Activated T-helper 1 cell treated with anti-CD3 and anti-CD28 coated beads, Interleukin-12 subunit alpha, Interleukin-12 subunit beta, Interleukin-2, Interleukin-4 antibody, amounts not matched to agents 30 ng/mL and 10 ng/mL and 1 ng/mL, durations not matched to agents 14 hours and 24 hours and 36 hours (primary cell): ENCODE measurements at regions of chr3 and their contacts with region 1.

Region 1: DNA sequence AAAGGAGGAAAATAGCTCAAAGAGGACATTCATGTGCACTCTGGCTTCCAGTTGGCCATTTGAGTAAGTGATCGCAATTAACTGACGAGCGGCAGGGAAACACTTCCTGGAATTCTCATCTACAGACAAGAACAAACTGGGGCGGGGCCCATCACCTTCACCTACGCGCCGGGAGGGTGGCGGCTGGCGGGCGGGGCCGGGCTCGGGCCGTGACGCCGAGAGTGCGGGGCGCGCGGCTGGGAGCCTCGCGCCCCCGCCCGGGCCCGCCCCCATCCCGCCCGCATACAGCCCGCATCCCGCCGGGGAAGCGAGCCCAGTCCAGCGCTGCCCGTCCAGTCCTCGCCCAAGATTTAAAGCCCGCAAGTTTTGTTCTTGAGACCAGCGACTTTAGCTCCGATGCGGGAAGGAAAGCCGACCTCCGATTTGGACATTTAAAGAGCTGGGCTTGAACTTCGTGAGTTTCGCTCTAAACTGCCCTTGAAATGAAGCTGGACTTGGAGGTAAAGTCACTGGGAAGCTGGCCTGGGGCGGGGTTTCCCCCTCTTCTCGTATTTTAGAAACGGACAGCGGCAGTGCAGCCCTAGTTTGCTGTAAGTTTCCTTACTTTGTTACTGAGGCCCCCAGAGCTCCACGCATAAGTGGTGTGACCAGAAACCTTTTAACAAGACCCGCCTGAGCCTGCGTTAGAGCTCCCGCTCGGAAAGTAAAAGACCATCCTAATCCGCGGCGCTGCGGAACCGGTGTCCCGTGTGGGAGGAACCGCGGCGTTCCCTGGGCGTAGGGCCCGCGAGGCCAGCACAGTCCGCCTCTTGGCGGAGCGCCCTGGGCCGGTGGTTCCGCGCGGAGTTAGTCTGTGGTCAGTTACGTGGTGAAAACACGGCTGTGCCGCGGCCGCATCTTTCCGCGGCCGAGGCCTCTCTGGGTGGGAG is at the start of gene B3GNT5:
- DNase-seq: peak; percentile 11
- H3K4me3 Mint-ChIP-seq: peak within 1 kb of the TSS; percentile 81
- H3K27ac Mint-ChIP-seq: peak within 1 kb of the TSS; percentile 52
- H3K4me1 Mint-ChIP-seq: peaks cover 18% of the 10 kb centered on the region
- H3K27me3 Mint-ChIP-seq: peaks cover 10% of the 10 kb centered on the region
- total RNA-seq, gene B3GNT5: 17.0 and 17.7 TPM in 2 replicates

Region 2: DNA sequence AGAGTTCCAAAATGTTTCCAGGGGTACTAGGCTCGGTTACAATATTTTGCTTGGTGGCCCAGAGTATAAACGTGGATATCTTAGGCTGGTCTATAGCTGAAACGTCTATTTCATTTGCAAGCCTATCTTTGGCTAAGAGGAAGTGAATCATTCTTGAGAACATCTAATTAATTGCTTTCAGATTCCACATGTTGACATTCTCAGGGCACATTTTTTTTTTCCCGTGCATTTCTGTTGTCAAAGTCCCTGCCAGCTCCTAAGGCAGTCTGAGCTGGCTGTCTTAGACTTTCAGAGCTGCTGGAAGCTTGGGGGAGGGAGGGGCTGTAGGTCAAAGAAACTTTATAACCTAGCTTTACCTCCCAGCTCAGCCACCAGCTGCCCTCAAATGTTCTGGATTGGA is 67.5 kb before region 1 on chr3:
- intact Hi-C with region 1: loop called (anchors 2 kb)
- DNase-seq: no peak
- H3K4me3 Mint-ChIP-seq: no peak overlapping the region
- H3K27ac Mint-ChIP-seq: no peak overlapping the region
- H3K4me1 Mint-ChIP-seq: peaks cover 8% of the 10 kb centered on the region
- H3K27me3 Mint-ChIP-seq: peaks cover 3% of the 10 kb centered on the region

Region 3: DNA sequence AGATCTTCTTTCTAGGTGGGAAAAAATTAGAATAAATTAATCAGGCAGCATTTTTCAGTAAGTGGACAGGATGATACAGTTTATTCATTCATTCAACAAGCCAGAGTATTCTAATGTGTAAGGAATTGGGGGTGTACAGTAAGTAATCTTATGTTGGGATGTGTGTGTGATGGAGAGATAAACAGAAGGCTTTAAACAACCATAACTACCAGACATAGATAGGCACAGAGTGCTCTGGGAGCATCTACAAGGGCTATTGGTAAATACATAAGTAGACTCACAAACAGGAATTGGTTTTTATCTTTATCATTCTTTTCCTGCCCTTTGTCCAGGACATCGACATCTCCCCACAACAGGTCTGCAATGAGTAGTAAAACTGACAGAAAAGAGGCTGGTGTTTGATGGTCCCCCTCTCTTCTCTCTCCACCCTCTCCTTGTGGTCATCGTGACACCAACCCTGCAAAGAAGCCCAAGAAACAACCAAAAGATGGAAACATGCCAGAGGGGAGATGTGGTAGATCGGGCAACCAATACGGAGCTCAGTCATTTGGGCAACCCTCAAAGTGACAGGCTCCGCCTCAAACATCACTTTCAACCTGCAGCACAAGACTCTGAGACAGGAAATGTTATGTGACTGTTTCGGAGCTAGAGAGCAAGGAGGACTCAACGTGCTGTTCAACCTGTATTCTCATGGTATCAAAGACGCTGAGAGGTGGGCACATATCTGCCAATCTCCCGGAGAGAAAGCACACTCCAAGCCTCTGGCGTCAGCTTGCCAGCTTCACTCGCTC is 28.9 kb before region 1 on chr3:
- intact Hi-C with region 1: loop called (anchors 2 kb)
- DNase-seq: peak; percentile 52
- H3K4me3 Mint-ChIP-seq: peak overlapping the region; percentile 53
- H3K27ac Mint-ChIP-seq: peak overlapping the region; percentile 88
- H3K4me1 Mint-ChIP-seq: peaks cover 44% of the 10 kb centered on the region
- H3K27me3 Mint-ChIP-seq: no peaks in the 10 kb centered on the region

Region 4: DNA sequence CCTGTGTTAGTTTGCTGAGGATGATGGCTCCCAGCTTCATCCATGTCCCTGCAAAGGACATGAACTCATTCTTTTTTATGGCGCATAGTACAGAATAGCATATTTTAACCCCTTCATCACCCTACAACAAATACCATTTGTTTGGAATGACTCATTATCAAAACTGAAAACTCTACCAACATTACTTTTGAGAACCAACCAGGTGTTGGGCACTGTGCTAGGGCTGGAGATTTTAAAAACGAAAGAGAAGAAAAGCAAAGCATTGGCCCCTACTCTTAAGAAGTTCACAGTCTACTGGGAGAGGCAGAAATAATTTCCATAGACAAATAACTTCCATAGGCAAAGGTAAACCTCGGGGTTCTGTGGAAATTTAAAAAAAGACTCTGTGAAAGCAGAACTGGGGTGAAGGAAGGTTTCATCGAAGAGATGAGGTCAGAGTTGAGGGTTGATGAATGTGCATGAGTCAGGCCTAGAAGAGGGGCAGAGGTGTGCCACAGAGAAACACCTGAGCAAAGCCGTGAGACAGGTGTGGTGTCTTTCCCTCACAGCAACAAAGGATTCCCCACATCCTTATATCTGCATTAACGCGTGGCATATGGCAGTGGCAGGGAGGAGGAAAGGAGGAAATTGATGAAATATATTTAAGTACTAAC is 124.2 kb after region 1 on chr3:
- intact Hi-C with region 1: loop called (anchors 1 kb)
- DNase-seq: no peak
- H3K4me3 Mint-ChIP-seq: no peak overlapping the region
- H3K27ac Mint-ChIP-seq: no peak overlapping the region
- H3K4me1 Mint-ChIP-seq: peaks cover 36% of the 10 kb centered on the region
- H3K27me3 Mint-ChIP-seq: no peaks in the 10 kb centered on the region